ENCODE measurements at regions of chr14 and their contacts with region 1.

Region 1: DNA sequence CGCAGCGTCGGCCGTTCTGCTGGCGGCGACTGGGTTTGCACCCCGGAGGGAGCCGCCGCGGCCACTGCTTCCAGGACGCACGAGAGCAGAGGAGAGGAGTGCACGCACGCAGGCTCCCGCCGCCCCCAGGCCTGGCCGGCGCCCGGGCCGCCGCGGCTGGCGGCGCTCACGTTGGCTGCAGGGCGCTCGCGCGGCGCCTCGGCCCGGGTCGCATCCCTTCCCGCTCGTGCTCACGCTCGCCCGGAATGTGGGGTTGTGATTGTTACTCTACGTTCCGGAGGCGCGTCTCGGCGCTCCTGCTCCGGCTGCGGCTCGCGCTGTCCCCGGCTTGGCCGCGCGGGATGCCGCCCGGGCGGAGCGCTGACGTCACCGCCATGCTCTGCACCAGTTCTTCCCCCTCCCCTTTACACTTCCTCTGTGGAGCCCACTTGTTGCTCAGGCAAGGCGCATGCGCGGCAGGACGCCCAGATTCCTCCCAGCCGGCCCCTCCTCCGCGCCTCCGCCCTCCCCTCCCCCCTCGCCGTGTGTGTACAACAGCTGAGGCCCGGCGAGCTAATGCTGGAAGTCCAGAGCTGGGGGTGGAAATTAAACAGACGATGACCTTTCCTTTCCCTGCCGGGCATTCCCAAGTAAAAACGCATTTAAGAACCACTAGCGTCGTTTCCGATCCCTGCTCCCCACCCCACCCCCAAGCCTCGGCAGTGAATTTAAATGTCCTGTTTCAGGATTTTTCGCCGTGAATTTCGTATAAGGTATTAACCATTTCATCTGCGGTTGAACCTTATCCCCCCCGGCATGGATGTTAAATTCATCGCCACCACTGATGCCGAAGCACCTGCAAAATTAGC is at the start of gene IRF2BPL:
- DNase-seq: peak; percentile 89 to 98 (median 93)
- ATAC-seq: peak; percentile 72 to 77 (median 74)
- H3K4me3 ChIP-seq: peak within 1 kb of the TSS; percentile 85 to 95
- H3K4me3 Mint-ChIP-seq: peak within 1 kb of the TSS; percentile 88 to 99 (median 91)
- H3K27ac ChIP-seq: peak within 1 kb of the TSS; percentile 98
- H3K27ac Mint-ChIP-seq: peak within 1 kb of the TSS; percentile 94 to 97
- H3K4me1 ChIP-seq: peaks cover 46 to 81% of the 10 kb centered on the region in 2 experiments
- H3K4me1 Mint-ChIP-seq: peaks cover 62 to 73% (median 67%) of the 10 kb centered on the region in 3 donors
- H3K27me3 ChIP-seq: no peaks in the 10 kb centered on the region
- H3K27me3 Mint-ChIP-seq: no peaks in the 10 kb centered on the region
- total RNA-seq, gene IRF2BPL: 32.6 to 50.4 (median 38.8) TPM

Region 2: DNA sequence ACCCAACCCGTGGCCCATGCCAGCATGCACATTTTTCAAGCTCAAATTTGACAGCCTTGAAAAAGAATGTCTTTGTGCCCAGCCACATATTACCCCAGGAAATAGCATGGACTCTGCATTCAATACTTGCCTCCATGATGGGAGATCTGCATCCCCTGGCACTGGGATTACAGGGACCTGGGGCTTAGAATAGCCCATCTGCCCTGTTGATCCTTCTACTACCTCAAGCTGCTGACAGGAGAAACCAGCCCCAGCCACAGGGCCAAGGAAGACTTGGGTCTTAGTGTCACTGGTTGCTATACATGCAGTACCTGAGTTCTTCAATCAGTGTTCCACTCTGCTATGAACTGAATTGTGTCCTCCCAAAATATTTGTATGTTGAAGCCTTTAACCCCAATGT is 117.1 kb before region 1 on chr14:
- CTCF ChIA-PET with region 1: interaction called, 3 to 11 read pairs
- POLR2A ChIA-PET with region 1: no interaction called
- DNase-seq: no peak
- ATAC-seq: no peak
- H3K4me3 ChIP-seq: no peak overlapping the region
- H3K4me3 Mint-ChIP-seq: no peak overlapping the region
- H3K27ac ChIP-seq: no peak overlapping the region
- H3K27ac Mint-ChIP-seq: no peak overlapping the region
- H3K4me1 ChIP-seq: peaks cover 4 to 28% of the 10 kb centered on the region in 2 experiments
- H3K4me1 Mint-ChIP-seq: peaks cover 19 to 30% (median 26%) of the 10 kb centered on the region in 3 donors
- H3K27me3 ChIP-seq: no peaks in the 10 kb centered on the region
- H3K27me3 Mint-ChIP-seq: no peaks in the 10 kb centered on the region

Region 3: DNA sequence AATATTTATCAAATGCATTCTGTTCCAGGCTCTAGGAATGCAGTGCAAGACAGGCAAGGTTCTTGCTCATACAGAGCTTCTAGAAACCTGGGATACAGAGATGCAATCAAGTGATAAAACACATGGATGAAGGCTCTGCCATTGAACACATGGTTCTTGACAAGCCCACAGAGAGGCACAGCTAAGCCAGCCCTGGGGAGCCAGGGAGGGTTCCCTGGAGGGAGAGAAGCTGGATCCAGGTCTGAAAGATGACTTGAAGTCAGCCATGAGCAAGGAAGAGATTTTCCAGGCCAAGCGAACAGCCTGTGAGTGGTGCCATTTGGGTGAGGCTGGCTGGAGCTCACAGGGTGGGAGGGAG is 66.3 kb before region 1 on chr14:
- CTCF ChIA-PET with region 1: interaction called, 6 to 15 read pairs
- POLR2A ChIA-PET with region 1: interaction called in 1 of 2 experiments, 10 read pairs
- DNase-seq: no peak
- ATAC-seq: peak in 1 of 4 experiments; percentile 4
- H3K4me3 ChIP-seq: peak overlapping the region; percentile 49 to 62
- H3K4me3 Mint-ChIP-seq: peak overlapping the region; percentile 74 to 80 (median 77)
- H3K27ac ChIP-seq: peak overlapping the region; percentile 89
- H3K27ac Mint-ChIP-seq: peak overlapping the region; percentile 97
- H3K4me1 ChIP-seq: peaks cover 54 to 71% of the 10 kb centered on the region in 2 experiments
- H3K4me1 Mint-ChIP-seq: peaks cover 70 to 89% (median 71%) of the 10 kb centered on the region in 3 donors
- H3K27me3 ChIP-seq: no peaks in the 10 kb centered on the region
- H3K27me3 Mint-ChIP-seq: no peaks in the 10 kb centered on the region

Region 4: DNA sequence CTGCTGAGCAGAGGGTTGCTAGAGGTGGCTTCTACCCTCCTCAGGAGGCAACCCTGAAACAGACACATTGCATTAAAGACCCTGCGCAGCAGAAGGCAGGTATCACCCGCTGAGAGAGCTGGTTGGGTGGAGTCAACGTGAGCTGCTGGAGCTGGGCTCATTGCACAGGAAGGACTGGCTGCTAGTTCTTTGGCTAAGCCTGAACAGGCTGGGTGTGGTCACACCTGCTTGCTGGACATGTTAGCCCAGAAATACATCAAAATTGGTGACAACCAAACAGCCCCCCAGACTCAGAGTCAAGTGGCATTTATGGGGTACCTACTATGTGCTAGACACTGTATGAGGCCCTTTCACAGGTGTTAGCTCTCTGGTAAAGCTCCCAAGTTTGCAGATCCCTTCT is 33.7 kb after region 1 on chr14:
- CTCF ChIA-PET with region 1: no interaction called
- POLR2A ChIA-PET with region 1: interaction called, 3 to 11 read pairs
- DNase-seq: no peak
- ATAC-seq: no peak
- H3K4me3 ChIP-seq: no peak overlapping the region
- H3K4me3 Mint-ChIP-seq: no peak overlapping the region
- H3K27ac ChIP-seq: no peak overlapping the region
- H3K27ac Mint-ChIP-seq: no peak overlapping the region
- H3K4me1 ChIP-seq: no peaks in the 10 kb centered on the region
- H3K4me1 Mint-ChIP-seq: peaks cover 0 to 8% (median 0%) of the 10 kb centered on the region in 3 donors
- H3K27me3 ChIP-seq: peaks cover 0 to 9% of the 10 kb centered on the region in 2 experiments
- H3K27me3 Mint-ChIP-seq: no peaks in the 10 kb centered on the region

Region 5: DNA sequence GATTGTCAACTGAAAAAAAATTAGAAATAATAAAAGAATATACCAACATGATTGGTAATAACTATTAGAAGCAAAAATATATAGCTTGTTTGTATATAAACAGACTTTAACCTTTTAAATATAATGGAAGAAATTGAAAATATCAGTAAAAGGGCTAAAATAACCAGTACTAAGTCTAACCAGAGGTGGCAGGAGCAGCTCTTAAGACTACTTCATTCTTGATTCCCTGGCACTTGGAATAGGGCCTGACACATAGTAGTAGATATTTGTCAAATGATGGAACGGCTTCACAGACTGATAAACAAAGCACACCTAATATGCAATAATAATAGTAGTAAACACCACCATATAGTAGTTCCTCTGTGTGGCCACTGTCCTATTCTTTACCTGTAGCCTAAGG is 162.4 kb after region 1 on chr14:
- CTCF ChIA-PET with region 1: no interaction called
- POLR2A ChIA-PET with region 1: no interaction called
- DNase-seq: no peak
- ATAC-seq: no peak
- H3K4me3 ChIP-seq: no peak overlapping the region
- H3K4me3 Mint-ChIP-seq: no peak overlapping the region
- H3K27ac ChIP-seq: no peak overlapping the region
- H3K27ac Mint-ChIP-seq: no peak overlapping the region
- H3K4me1 ChIP-seq: peaks cover 0 to 5% of the 10 kb centered on the region in 2 experiments
- H3K4me1 Mint-ChIP-seq: no peaks in the 10 kb centered on the region
- H3K27me3 ChIP-seq: peaks cover 0 to 13% of the 10 kb centered on the region in 2 experiments
- H3K27me3 Mint-ChIP-seq: peaks cover 19 to 27% of the 10 kb centered on the region in 2 donors

Region 6: DNA sequence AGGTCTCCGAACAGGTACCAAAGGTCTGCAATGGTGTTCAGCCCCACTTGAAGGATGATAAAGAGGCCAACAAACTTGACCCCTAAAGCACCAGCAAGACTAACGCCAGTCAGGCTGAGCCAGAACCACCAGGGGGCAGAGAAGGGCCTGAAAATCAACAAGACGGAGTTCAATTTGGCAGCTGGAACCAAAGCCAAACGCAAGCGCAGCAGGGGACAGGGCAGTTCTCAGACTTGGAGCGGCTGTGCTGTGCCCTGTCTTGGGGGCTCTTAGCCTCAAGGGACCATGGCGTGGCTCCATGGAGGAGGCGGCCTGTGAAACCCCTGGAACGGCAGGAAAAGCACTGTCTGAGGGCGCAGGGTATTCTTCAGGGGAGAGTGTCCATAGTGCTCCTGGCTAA is 272.5 kb after region 1 on chr14:
- CTCF ChIA-PET with region 1: no interaction called
- POLR2A ChIA-PET with region 1: no interaction called
- DNase-seq: peak in 31 of 35 experiments; percentile 10 to 59 (median 35)
- ATAC-seq: peak; percentile 22 to 48 (median 29)
- H3K4me3 ChIP-seq: no peak overlapping the region
- H3K4me3 Mint-ChIP-seq: no peak overlapping the region
- H3K27ac ChIP-seq: no peak overlapping the region
- H3K27ac Mint-ChIP-seq: no peak overlapping the region
- H3K4me1 ChIP-seq: no peaks in the 10 kb centered on the region
- H3K4me1 Mint-ChIP-seq: peaks cover 0 to 14% (median 14%) of the 10 kb centered on the region in 3 donors
- H3K27me3 ChIP-seq: no peaks in the 10 kb centered on the region
- H3K27me3 Mint-ChIP-seq: no peaks in the 10 kb centered on the region